GM12878 (cell line): ENCODE measurements at regions of chr4 and their contacts with region 1.

Region 1: DNA sequence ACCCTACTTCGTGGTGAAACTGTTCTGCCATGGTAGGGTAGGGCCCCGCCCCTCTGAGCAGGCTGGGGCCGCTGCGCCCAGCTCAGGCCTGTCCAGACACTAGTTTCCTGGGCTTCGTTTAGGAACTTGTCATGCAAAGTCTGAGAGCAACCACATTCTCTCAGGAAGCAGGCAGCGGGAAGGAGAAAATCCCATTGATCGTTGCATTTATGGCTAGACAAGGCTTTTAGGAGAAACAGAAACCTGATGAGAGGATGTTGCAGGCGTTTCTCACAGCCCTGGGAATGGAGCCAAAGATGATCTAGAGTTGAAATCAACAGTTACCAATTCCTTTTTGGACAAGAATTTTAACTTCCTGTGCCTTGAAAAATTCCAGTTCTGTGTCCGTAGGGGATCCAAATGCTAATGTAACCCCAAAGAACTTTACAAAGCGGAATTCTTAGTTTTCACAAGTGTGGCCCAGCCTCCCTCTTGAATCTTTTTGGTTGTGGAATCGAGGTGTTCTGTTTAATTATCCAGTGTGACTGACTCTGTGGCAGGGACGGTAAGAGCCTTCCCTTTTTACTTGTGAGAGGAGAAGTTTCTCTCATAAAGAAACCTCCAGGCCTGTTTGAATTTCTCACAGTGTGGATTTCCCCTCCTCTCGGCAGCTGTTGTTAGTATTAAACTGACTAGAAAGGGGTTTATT is 4.5 kb upstream of the CXCL9 start:
- DNase-seq: peak; percentile 60
- ATAC-seq: peak; percentile 88
- H3K4me3 ChIP-seq: peak overlapping the region; percentile 32; the same call in 1 of the 2 replicates
- H3K27ac ChIP-seq: peak overlapping the region; percentile 85
- H3K4me1 ChIP-seq: peaks cover 49% of the 10 kb centered on the region
- H3K27me3 ChIP-seq: no peaks in the 10 kb centered on the region; a peak in 1 of 4 replicates
- CTCF ChIP-seq: no peak
- EP300 ChIP-seq: peak in 1 of 2 experiments; percentile 22; a peak in 1 of 4 replicates
- POLR2A ChIP-seq: no peak
- RAD21 ChIP-seq: no peak

Region 2: DNA sequence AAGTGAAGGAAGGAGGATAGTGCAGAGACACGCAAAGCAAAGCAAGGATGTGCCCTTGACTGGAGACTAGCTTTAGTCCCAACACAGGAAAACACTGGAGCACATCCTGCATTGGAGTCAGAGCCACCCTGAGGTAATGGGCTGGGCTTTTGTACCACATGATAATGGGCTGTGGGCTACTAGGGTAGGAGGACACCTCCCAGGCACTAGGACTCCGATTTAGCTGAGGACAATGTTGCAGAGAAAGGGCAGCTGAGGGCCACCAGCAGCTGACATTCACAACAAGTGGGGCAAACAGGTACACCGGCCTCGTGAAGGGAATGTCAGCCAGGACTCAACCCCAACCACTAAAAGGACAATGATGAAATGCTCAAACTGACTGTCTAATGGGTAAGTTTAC is 31.3 kb before region 1 on chr4:
- CTCF ChIA-PET with region 1: no interaction called
- POLR2A ChIA-PET with region 1: no interaction called
- RAD21 ChIA-PET with region 1: no interaction called
- SMC1A ChIA-PET with region 1: no interaction called
- in situ Hi-C with region 1: no loop called
- intact Hi-C with region 1: no loop called
- DNase-seq: no peak
- ATAC-seq: no peak
- H3K4me3 ChIP-seq: no peak overlapping the region
- H3K27ac ChIP-seq: no peak overlapping the region
- H3K4me1 ChIP-seq: no peaks in the 10 kb centered on the region
- H3K27me3 ChIP-seq: no peaks in the 10 kb centered on the region
- CTCF ChIP-seq: no peak
- EP300 ChIP-seq: no peak
- POLR2A ChIP-seq: no peak
- RAD21 ChIP-seq: no peak

Region 3: GRCh38 chr4:76023389-76023788 is 11.5 kb after region 1 on chr4 and contains the start of gene CXCL10:
- CTCF ChIA-PET with region 1: interaction called, 10 read pairs
- POLR2A ChIA-PET with region 1: no interaction called
- RAD21 ChIA-PET with region 1: no interaction called
- SMC1A ChIA-PET with region 1: interaction called, 4 read pairs
- in situ Hi-C with region 1: no loop called
- intact Hi-C with region 1: no loop called
- DNase-seq: no peak
- ATAC-seq: 0 out of 3 replicates have a peak, but pooled peaks have one; percentile 28
- H3K4me3 ChIP-seq: no peak within 1 kb of the TSS
- H3K27ac ChIP-seq: no peak within 1 kb of the TSS
- H3K4me1 ChIP-seq: peaks cover 4% of the 10 kb centered on the region; the same call in 1 of the 2 replicates
- H3K27me3 ChIP-seq: no peaks in the 10 kb centered on the region; a peak in 1 of 4 replicates
- CTCF ChIP-seq: no peak
- EP300 ChIP-seq: no peak
- POLR2A ChIP-seq: no peak
- RAD21 ChIP-seq: no peak
- polyA plus RNA-seq, gene CXCL10: 7.7 to 10.4 TPM

Region 4: DNA sequence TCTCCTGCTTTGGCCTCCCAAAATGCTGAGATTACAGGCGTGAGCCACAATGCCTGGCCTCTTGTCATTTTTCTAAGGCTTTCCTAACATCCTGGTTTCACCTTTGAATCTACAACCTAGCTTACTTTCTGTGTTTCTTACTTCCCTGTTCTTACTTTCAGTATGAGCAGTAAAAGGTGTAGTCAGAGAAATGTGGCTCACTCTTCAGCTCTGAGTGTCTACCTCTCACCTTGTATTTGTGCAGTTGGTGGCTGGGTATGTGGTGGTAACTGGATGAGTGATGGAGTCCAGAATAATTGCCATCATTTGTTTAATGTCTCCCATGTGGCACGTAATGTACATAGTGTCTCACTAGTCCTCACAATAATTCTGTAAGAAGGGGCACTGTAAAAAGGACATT is 43.2 kb after region 1 on chr4:
- CTCF ChIA-PET with region 1: interaction called, 4 read pairs
- POLR2A ChIA-PET with region 1: interaction called, 4 read pairs
- RAD21 ChIA-PET with region 1: interaction called, 5 read pairs
- SMC1A ChIA-PET with region 1: interaction called, 7 read pairs
- in situ Hi-C with region 1: no loop called
- intact Hi-C with region 1: loop called (anchors 5 kb)
- DNase-seq: peak; percentile 74
- ATAC-seq: peak; percentile 98
- H3K4me3 ChIP-seq: no peak overlapping the region; the same call in 1 of the 2 replicates
- H3K27ac ChIP-seq: no peak overlapping the region
- H3K4me1 ChIP-seq: peaks cover 29% of the 10 kb centered on the region
- H3K27me3 ChIP-seq: peaks cover 0 to 2% of the 10 kb centered on the region in 2 experiments; a peak in 2 of 4 replicates
- CTCF ChIP-seq: no peak
- EP300 ChIP-seq: peak; percentile 26 to 85; a peak in 2 of 4 replicates
- POLR2A ChIP-seq: no peak
- RAD21 ChIP-seq: 0 out of 2 replicates have a peak, but pooled peaks have one; percentile 10

Region 5: DNA sequence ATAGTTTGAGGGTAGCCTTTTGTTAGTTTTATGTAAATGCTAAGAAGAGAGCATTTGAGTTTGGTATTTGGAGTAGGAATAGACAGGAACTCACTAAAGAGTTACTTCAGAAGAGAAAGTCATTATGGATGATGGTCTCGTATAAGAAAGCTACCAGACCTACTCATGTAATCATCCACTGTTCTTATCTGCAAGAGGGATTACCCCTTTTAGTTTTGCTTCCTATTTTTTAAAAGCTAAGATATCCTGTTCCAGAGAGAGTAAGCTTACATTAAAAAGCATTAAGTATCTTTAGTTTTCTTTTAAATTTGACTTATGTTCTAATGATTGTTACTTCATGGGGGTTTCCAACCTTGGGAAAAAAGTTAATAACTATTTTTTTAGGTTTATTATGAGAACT is 50.1 kb after region 1 on chr4:
- CTCF ChIA-PET with region 1: interaction called, 7 read pairs
- POLR2A ChIA-PET with region 1: no interaction called
- RAD21 ChIA-PET with region 1: interaction called, 4 read pairs
- SMC1A ChIA-PET with region 1: interaction called, 12 read pairs
- in situ Hi-C with region 1: no loop called
- intact Hi-C with region 1: loop called (anchors 5 kb)
- DNase-seq: no peak
- ATAC-seq: peak; percentile 78
- H3K4me3 ChIP-seq: no peak overlapping the region
- H3K27ac ChIP-seq: no peak overlapping the region
- H3K4me1 ChIP-seq: peaks cover 11% of the 10 kb centered on the region; the same call in 1 of the 2 replicates
- H3K27me3 ChIP-seq: peaks cover 0 to 3% of the 10 kb centered on the region in 2 experiments; a peak in 3 of 4 replicates
- CTCF ChIP-seq: no peak
- EP300 ChIP-seq: no peak
- POLR2A ChIP-seq: no peak
- RAD21 ChIP-seq: no peak